Heart left ventricle (tissue), 16 donors: ENCODE measurements at regions of chr17 and their contacts with region 1.

Region 1: DNA sequence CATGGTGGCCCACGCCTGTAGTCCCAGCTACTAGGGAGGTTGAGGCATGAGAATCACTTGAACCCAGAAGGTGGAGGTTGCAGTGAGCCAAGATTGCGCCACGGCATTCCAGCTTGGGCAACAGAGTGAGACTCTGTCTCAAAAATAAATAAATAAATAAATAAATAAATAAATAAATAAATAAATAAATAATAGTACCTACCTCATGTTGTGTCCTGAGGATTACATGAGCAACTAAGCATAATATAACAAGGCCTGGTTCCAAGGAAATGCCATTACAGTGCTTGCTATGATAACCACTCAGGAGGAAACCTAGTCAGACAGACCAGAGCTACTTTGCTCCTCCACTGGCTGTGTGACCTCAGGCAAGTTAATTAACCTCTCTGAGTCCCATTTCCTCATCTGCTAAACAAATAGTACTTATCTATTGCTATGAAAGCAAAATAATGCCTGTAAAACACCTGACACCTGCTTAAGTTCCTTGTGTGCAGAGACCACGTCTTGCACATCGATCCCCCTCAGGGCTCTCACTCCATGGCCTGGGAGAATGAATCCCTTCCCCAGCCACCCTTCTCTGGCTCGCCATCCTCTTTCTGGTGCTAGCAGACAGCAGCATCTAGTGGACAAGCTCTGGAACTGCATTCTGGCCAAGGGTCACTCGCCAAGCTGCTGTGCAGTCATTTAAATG is 7.5 kb downstream of the EPOP start:
- DNase-seq: peak; percentile 51 to 69 (median 59)
- ATAC-seq: peak; percentile 47 to 79 (median 72)
- H3K4me3 ChIP-seq: no peak overlapping the region
- H3K27ac ChIP-seq: no peak overlapping the region
- H3K4me1 ChIP-seq: no peaks in the 10 kb centered on the region
- H3K27me3 ChIP-seq: peaks cover 0 to 44% (median 14%) of the 10 kb centered on the region in 9 donors
- CTCF ChIP-seq: peak; percentile 94 to 100 (median 98)
- POLR2A ChIP-seq: no peak

Region 2: GRCh38 chr17:38421171-38421841 is 245.9 kb before region 1 on chr17:
- intact Hi-C with region 1: loop called (anchors 2 to 10 kb)
- DNase-seq: no peak
- ATAC-seq: peak; percentile 4 to 31 (median 12)
- H3K4me3 ChIP-seq: peak overlapping the region in 2 of 12 donors; percentile 15 to 17
- H3K27ac ChIP-seq: peak overlapping the region in 10 of 12 donors; percentile 27 to 79 (median 52)
- H3K4me1 ChIP-seq: peaks cover 0 to 65% (median 33%) of the 10 kb centered on the region in 12 donors
- H3K27me3 ChIP-seq: peaks cover 0 to 31% (median 19%) of the 10 kb centered on the region in 9 donors
- CTCF ChIP-seq: no peak
- POLR2A ChIP-seq: no peak

Region 3: GRCh38 chr17:38485146-38485468 is 182.1 kb before region 1 on chr17:
- intact Hi-C with region 1: loop called in 5 of 10 experiments (anchors 5 kb)
- DNase-seq: no peak
- ATAC-seq: no peak
- H3K4me3 ChIP-seq: no peak overlapping the region
- H3K27ac ChIP-seq: peak overlapping the region in 7 of 12 donors; percentile 10 to 79 (median 58)
- H3K4me1 ChIP-seq: peaks cover 0 to 33% (median 13%) of the 10 kb centered on the region in 12 donors
- H3K27me3 ChIP-seq: no peaks in the 10 kb centered on the region
- CTCF ChIP-seq: no peak
- POLR2A ChIP-seq: no peak

Region 4: DNA sequence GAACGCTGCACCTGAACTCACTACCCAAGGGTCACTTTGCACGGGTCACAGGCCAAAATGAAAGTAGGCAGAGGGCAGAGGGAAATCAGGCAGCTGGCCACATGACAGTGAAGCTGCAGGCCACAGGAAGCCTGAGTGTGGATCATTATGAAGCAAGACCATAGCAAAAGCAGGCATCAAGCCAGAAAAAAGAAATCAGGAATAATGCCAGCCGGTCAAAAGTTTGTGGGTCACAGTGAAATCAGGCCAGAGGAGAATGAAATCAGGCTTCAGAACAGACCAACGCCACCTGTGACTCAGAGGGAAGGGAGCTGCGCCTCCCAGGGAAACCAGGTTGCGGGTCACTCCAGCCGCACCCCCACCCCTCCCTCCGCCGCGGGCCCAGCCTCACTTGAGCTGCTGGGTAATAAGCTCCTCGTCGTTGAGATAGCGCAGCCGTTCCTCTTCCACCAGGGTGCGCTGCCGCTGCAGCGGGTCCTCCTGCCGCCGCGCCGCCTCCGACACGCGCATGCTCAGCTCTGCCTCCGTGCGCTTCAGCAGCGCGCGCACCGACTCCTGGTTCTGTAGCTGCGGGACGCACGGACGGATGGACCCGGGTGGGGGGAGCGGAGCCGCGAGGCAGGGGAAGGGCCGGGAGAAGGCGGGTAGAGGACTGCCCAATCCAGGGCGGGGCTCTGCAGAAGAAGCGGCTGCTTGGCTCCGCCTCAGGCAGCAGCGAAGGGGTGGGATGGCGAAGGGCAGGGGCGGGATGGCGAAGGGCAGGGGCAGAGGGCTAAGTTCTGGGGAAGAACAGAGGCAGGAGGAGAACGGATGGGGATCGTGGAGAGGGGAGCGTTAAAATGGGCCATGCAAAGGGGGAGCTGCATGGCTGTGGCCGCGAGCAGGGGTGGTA is 109.2 kb before region 1 on chr17:
- intact Hi-C with region 1: loop called (anchors 1 to 5 kb)
- DNase-seq: peak; percentile 88 to 95 (median 92)
- ATAC-seq: peak; percentile 77 to 95 (median 92)
- H3K4me3 ChIP-seq: peak overlapping the region; percentile 8 to 57 (median 44)
- H3K27ac ChIP-seq: peak overlapping the region in 4 of 12 donors; percentile 3 to 32 (median 16)
- H3K4me1 ChIP-seq: peaks cover 0 to 38% (median 25%) of the 10 kb centered on the region in 12 donors
- H3K27me3 ChIP-seq: peaks cover 29 to 52% (median 43%) of the 10 kb centered on the region in 9 donors
- CTCF ChIP-seq: peak; percentile 85 to 97 (median 93)
- POLR2A ChIP-seq: peak in 1 of 2 donors; percentile 43

Region 5: GRCh38 chr17:38605888-38606645 is 61.2 kb before region 1 on chr17 and contains the start of gene SRCIN1:
- intact Hi-C with region 1: loop called in 1 of 10 experiments (anchors 5 kb)
- DNase-seq: peak; percentile 40 to 74 (median 58)
- ATAC-seq: peak in 3 of 4 donors; percentile 3 to 32 (median 27)
- H3K4me3 ChIP-seq: peak within 1 kb of the TSS; percentile 30 to 67 (median 55)
- H3K27ac ChIP-seq: peak within 1 kb of the TSS in 6 of 12 donors; percentile 11 to 58 (median 24)
- H3K4me1 ChIP-seq: peaks cover 0 to 41% (median 12%) of the 10 kb centered on the region in 12 donors
- H3K27me3 ChIP-seq: peaks cover 13 to 91% (median 56%) of the 10 kb centered on the region in 9 donors
- CTCF ChIP-seq: peak; percentile 53 to 79 (median 73)
- POLR2A ChIP-seq: no peak
- total RNA-seq, gene SRCIN1: 0.46 to 1.7 (median 1.1) TPM

Region 6: GRCh38 chr17:38637951-38638350 is 29.3 kb before region 1 on chr17:
- intact Hi-C with region 1: no loop called
- DNase-seq: no peak
- ATAC-seq: no peak
- H3K4me3 ChIP-seq: no peak overlapping the region
- H3K27ac ChIP-seq: no peak overlapping the region
- H3K4me1 ChIP-seq: no peaks in the 10 kb centered on the region
- H3K27me3 ChIP-seq: peaks cover 0 to 11% (median 0%) of the 10 kb centered on the region in 9 donors
- CTCF ChIP-seq: no peak
- POLR2A ChIP-seq: no peak